PC-3 (cell line): ENCODE measurements at regions of chr3 and their contacts with region 1.

Region 1: DNA sequence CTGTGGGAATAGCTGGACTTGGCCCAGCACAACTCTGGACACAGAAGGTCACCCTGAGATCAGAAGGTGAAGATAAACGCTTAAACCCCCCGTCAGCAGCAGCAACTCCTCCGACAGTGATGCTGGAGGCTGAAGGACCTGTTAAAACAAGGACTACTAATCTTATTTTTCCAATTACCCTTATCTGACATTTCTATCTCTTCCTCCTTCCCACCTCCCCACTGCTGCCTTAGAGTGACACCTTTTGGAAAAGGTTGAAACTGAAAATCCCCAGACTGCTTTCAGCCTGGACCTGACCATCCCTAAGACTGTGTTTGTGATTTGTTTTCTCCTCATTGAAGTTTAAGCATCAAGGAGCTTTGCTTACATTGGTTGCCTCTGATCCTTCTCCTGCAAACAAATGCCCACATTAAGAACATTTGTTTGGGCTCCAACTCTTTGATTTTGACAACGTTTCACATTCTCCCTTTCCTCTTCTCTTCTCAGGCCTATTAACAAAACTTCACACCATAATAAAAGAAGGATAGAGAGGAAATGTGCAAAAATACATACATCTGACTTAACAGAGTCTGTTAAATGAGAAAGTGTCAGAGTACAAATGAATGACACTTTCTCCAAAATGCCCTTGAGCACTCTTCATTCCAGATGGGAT is 410.6 kb upstream of the WNT5A start:
- DNase-seq: peak; percentile 72
- ATAC-seq: peak; percentile 76
- H3K4me3 ChIP-seq: no peak overlapping the region
- H3K27ac ChIP-seq: no peak overlapping the region
- H3K4me1 ChIP-seq: peaks cover 16% of the 10 kb centered on the region
- H3K27me3 ChIP-seq: peaks cover 4% of the 10 kb centered on the region; the same call in 1 of the 2 replicates
- CTCF ChIP-seq: peak; percentile 87

Region 2: GRCh38 chr3:54830658-54831057 is 1067.0 kb before region 1 on chr3:
- CTCF ChIA-PET with region 1: interaction called, 3 read pairs
- POLR2A ChIA-PET with region 1: no interaction called
- intact Hi-C with region 1: loop called (anchors 5 kb)
- DNase-seq: peak; percentile 75
- ATAC-seq: peak; percentile 55
- H3K4me3 ChIP-seq: no peak overlapping the region
- H3K27ac ChIP-seq: no peak overlapping the region
- H3K4me1 ChIP-seq: no peaks in the 10 kb centered on the region
- H3K27me3 ChIP-seq: no peaks in the 10 kb centered on the region
- CTCF ChIP-seq: peak; percentile 75

Region 3: DNA sequence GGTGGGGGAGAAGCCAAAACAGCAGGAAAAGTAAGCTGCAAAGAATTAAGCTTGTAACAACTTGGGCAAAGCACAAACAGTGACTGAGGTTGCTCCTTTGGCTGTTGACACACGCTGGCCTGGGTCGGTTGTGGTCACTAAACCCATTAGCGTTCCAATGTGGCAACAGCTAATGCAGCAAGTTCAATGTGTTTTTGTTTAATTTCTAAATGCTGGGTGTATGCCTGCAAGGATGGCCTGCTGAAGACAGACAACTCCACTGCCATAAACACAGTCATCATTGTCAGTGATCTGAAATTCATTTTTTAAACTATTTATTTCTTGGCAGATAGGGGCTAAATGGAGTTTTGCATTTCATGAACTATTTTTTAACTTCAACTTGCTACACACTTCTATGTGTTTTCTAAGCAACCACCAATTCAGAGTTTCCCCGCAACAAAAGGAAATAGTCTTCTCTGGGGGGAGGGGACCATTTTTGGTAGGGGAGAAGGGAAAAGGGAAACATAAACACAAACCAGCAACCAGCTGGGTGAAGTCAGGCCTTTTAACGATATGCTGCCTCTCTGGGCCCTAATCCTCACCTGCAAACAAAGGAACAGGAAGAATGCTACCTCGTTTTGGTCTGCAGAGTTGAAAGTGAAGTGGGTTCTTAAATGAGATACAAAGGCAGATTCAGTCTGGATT is 375.8 kb before region 1 on chr3:
- CTCF ChIA-PET with region 1: no interaction called
- POLR2A ChIA-PET with region 1: no interaction called
- intact Hi-C with region 1: loop called (anchors 10 kb)
- DNase-seq: no peak
- ATAC-seq: no peak
- H3K4me3 ChIP-seq: no peak overlapping the region
- H3K27ac ChIP-seq: no peak overlapping the region
- H3K4me1 ChIP-seq: peaks cover 59% of the 10 kb centered on the region
- H3K27me3 ChIP-seq: no peaks in the 10 kb centered on the region
- CTCF ChIP-seq: no peak

Region 4: GRCh38 chr3:55721716-55722484 is 175.8 kb before region 1 on chr3:
- CTCF ChIA-PET with region 1: no interaction called
- POLR2A ChIA-PET with region 1: no interaction called
- intact Hi-C with region 1: loop called (anchors 2 kb)
- DNase-seq: peak; percentile 56
- ATAC-seq: peak; percentile 64
- H3K4me3 ChIP-seq: no peak overlapping the region
- H3K27ac ChIP-seq: no peak overlapping the region
- H3K4me1 ChIP-seq: no peaks in the 10 kb centered on the region
- H3K27me3 ChIP-seq: no peaks in the 10 kb centered on the region
- CTCF ChIP-seq: peak; percentile 64

Region 5: GRCh38 chr3:55795731-55796130 is 102.0 kb before region 1 on chr3:
- CTCF ChIA-PET with region 1: no interaction called
- POLR2A ChIA-PET with region 1: no interaction called
- intact Hi-C with region 1: loop called (anchors 5 kb)
- DNase-seq: peak; percentile 97
- ATAC-seq: peak; percentile 92
- H3K4me3 ChIP-seq: peak overlapping the region; percentile 32; the same call in 1 of the 2 replicates
- H3K27ac ChIP-seq: peak overlapping the region; percentile 93
- H3K4me1 ChIP-seq: peaks cover 42% of the 10 kb centered on the region
- H3K27me3 ChIP-seq: no peaks in the 10 kb centered on the region
- CTCF ChIP-seq: no peak

Region 6: GRCh38 chr3:56251343-56251945 is 353.7 kb after region 1 on chr3:
- CTCF ChIA-PET with region 1: interaction called, 5 read pairs
- POLR2A ChIA-PET with region 1: no interaction called
- intact Hi-C with region 1: loop called (anchors 1 kb)
- DNase-seq: peak; percentile 76
- ATAC-seq: peak; percentile 83
- H3K4me3 ChIP-seq: no peak overlapping the region
- H3K27ac ChIP-seq: no peak overlapping the region
- H3K4me1 ChIP-seq: no peaks in the 10 kb centered on the region
- H3K27me3 ChIP-seq: peaks cover 8% of the 10 kb centered on the region; the same call in 1 of the 2 replicates
- CTCF ChIP-seq: peak; percentile 87

Region 7: DNA sequence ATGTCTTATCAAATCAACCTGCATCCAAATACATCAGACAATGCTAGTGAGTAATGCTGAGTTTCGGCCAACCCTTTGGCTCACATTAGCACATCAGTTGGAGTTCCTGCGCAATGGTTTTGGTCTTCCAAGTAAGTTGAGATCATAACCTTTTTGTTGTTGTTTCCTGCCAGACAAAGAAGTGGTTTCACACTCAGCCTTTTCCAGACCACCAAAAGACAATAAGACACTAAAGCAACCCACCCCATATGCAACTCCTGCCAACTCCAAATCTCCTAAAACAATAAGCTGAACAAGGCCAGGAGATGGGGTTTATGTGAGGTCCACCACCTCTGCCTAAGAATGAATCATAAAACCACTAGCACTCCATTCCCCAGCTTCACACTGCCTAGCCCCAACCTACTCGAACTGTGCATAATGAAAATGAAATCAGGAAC is 393.6 kb after region 1 on chr3:
- CTCF ChIA-PET with region 1: no interaction called
- POLR2A ChIA-PET with region 1: no interaction called
- intact Hi-C with region 1: no loop called
- DNase-seq: no peak
- ATAC-seq: no peak
- H3K4me3 ChIP-seq: no peak overlapping the region
- H3K27ac ChIP-seq: no peak overlapping the region
- H3K4me1 ChIP-seq: no peaks in the 10 kb centered on the region
- H3K27me3 ChIP-seq: peaks cover 20% of the 10 kb centered on the region; the same call in 1 of the 2 replicates
- CTCF ChIP-seq: no peak